Spleen (tissue), 13 donors: ENCODE measurements at regions of chr6 and their contacts with region 1.

Region 1: GRCh38 chr6:33585403-33586107 is 5.5 kb upstream of the BAK1 start:
- DNase-seq: peak; percentile 95
- H3K4me3 ChIP-seq: peak overlapping the region in 2 of 8 donors; percentile 2 to 48
- H3K27ac ChIP-seq: peak overlapping the region in 7 of 8 donors; percentile 38 to 78 (median 71)
- H3K4me1 ChIP-seq: peaks cover 20 to 60% (median 35%) of the 10 kb centered on the region in 6 donors
- H3K27me3 ChIP-seq: no peaks in the 10 kb centered on the region
- CTCF ChIP-seq: peak; percentile 96 to 100 (median 100)
- POLR2A ChIP-seq: no peak

Region 2: GRCh38 chr6:33317669-33318425 is 267.7 kb before region 1 on chr6 and contains the start of gene ZBTB22:
- intact Hi-C with region 1: no loop called
- DNase-seq: peak; percentile 99
- H3K4me3 ChIP-seq: peak within 1 kb of the TSS; percentile 39 to 82 (median 65)
- H3K27ac ChIP-seq: peak within 1 kb of the TSS; percentile 58 to 100 (median 94)
- H3K4me1 ChIP-seq: peaks cover 60 to 80% (median 73%) of the 10 kb centered on the region in 6 donors
- H3K27me3 ChIP-seq: no peaks in the 10 kb centered on the region
- CTCF ChIP-seq: no peak
- POLR2A ChIP-seq: no peak
- total RNA-seq, gene ZBTB22: 16.1 to 27.2 (median 20.1) TPM

Region 3: GRCh38 chr6:33683051-33683571 is 97.6 kb after region 1 on chr6:
- intact Hi-C with region 1: no loop called
- DNase-seq: peak; percentile 78
- H3K4me3 ChIP-seq: no peak overlapping the region
- H3K27ac ChIP-seq: peak overlapping the region in 2 of 8 donors; percentile 18 to 36
- H3K4me1 ChIP-seq: peaks cover 0 to 22% (median 10%) of the 10 kb centered on the region in 6 donors
- H3K27me3 ChIP-seq: no peaks in the 10 kb centered on the region
- CTCF ChIP-seq: no peak
- POLR2A ChIP-seq: no peak

Region 4: GRCh38 chr6:33700391-33701050 is 115.0 kb after region 1 on chr6:
- intact Hi-C with region 1: loop called (anchors 5 kb)
- DNase-seq: peak; percentile 91
- H3K4me3 ChIP-seq: no peak overlapping the region
- H3K27ac ChIP-seq: peak overlapping the region in 5 of 8 donors; percentile 15 to 91 (median 51)
- H3K4me1 ChIP-seq: peaks cover 38 to 87% (median 64%) of the 10 kb centered on the region in 6 donors
- H3K27me3 ChIP-seq: no peaks in the 10 kb centered on the region
- CTCF ChIP-seq: peak; percentile 49 to 81 (median 60)
- POLR2A ChIP-seq: no peak